Left cardiac atrium (tissue), 4 donors: ENCODE measurements at regions of chr12 and their contacts with region 1.

Region 1: DNA sequence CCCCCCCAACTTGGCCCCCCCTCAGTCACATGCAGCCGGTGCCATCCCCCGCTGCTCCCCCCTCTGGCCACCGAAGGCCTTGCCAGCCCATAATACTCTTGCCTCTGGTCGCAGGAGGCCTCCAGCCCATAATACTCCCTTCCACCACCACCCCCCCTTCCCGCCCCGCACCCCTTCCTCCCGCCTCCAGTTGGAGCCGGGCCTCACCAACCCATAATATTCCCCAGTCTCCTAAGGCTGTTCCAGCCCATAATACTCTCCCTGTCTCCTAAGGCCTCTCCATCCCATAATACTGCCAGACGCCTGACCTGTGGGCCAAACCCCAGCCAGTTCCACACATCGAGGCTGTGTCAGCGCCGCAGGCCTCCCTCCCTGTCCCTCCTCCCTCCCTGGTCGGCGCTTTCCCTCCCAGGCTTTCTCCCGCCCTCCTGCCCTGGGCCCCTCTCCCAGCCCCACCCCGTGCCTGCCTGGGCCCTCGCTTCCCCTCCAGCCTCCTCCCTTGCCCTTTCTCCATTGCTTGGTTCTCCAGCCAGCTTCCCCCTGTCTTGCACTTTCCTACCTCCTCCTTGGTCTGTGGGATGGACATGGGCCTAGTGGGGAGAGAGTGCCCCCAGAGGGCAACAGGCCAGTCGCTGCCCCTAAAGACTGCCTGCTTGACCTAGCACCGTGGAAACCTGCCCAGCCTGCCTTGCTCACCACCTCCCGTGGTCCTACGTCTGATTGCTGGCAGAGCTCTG is 6.8 kb upstream of the CHD4 start:
- DNase-seq: peak; percentile 91
- ATAC-seq: peak; percentile 88 to 92

Region 2: GRCh38 chr12:6697584-6698351 is 83.8 kb after region 1 on chr12:
- intact Hi-C with region 1: loop called in 1 of 2 experiments (anchors 10 kb)
- DNase-seq: no peak
- ATAC-seq: no peak

Region 3: GRCh38 chr12:6825398-6826124 is 211.6 kb after region 1 on chr12:
- intact Hi-C with region 1: loop called (anchors 10 kb)
- DNase-seq: peak; percentile 85
- ATAC-seq: peak; percentile 53 to 58